GM10248 (cell line): ENCODE measurements at regions of chr9 and their contacts with region 1.

Region 1: DNA sequence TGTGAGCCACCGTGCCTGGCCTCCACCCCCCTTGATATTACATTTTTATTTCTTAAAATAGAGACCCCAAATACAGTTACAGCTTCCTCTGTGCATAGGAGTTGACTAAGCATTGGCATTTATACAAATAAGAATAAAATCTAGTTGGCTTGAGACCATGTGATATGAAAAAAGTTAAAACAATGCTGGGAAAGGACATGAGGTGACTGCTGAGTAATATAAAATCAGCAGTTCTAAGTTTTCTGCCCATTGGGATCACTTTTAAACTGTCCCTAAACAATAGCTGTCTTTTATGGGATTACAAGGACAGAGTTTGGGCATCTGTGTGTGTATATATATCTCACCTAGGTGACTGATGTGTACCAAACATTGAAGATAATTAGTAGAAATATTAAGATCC is 96.6 kb downstream of the UBE2R2 start:
- DNase-seq: no peak
- CTCF ChIP-seq: no peak

Region 2: GRCh38 chr9:33924978-33925797 is 11.6 kb after region 1 on chr9:
- CTCF ChIA-PET with region 1: interaction called, 15 read pairs
- POLR2A ChIA-PET with region 1: no interaction called
- DNase-seq: peak; percentile 48
- CTCF ChIP-seq: peak; percentile 33

Region 3: GRCh38 chr9:34185778-34186551 is 272.4 kb after region 1 on chr9:
- CTCF ChIA-PET with region 1: no interaction called
- POLR2A ChIA-PET with region 1: no interaction called
- DNase-seq: peak; percentile 61
- CTCF ChIP-seq: no peak